ENCODE measurements at regions of chr5 and their contacts with region 1.

Region 1: GRCh38 chr5:39714036-39714698 is 289.4 kb upstream of the DAB2 start:
- DNase-seq: no peak
- H3K4me3 ChIP-seq: no peak overlapping the region
- CTCF ChIP-seq: peak; percentile 65

Region 2: GRCh38 chr5:39689919-39690318 is 24.2 kb before region 1 on chr5:
- CTCF ChIA-PET with region 1: no interaction called
- POLR2A ChIA-PET with region 1: no interaction called
- DNase-seq: no peak
- H3K4me3 ChIP-seq: no peak overlapping the region
- CTCF ChIP-seq: no peak

Region 3: GRCh38 chr5:39700523-39700922 is 13.6 kb before region 1 on chr5:
- CTCF ChIA-PET with region 1: interaction called, 28 read pairs
- POLR2A ChIA-PET with region 1: no interaction called
- DNase-seq: no peak
- H3K4me3 ChIP-seq: no peak overlapping the region
- CTCF ChIP-seq: no peak

Region 4: GRCh38 chr5:39943811-39944210 is 229.6 kb after region 1 on chr5:
- CTCF ChIA-PET with region 1: interaction called, 65 read pairs
- POLR2A ChIA-PET with region 1: no interaction called
- DNase-seq: no peak
- H3K4me3 ChIP-seq: no peak overlapping the region
- CTCF ChIP-seq: no peak

Region 5: DNA sequence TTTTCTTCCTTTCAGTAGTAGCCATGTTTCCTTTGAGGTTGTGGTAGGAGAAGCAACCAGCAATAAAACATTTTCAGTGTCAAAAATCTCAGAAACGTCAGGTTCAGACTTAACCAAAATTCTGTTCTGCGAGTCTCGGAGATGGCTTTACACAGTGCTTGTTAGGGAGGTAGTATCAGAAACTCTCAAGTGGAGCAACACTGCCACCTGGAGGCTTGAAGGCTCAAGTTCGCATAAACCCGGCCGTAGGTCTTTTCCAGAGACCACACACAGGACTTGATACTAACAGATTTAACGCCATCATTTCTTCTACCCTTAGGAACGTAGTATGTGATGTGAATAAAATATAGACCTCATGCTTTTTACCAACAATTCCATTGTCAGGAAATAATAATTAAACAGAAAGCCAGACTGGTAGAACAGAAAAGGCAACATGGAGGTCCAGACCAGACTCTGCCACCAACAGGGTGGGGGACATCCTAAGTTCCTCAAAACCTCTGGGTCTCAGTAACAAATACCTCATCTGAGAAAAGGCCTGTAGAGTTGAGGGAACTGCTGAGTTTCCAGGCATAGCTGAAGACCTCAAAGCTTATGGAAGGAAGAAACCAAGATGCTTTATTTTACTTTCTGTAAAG is 974.1 kb after region 1 on chr5:
- CTCF ChIA-PET with region 1: interaction called, 67 read pairs
- POLR2A ChIA-PET with region 1: interaction called, 3 read pairs
- DNase-seq: no peak
- H3K4me3 ChIP-seq: no peak overlapping the region
- CTCF ChIP-seq: peak; percentile 72